ENCODE measurements at regions of chr15 and their contacts with region 1.

Region 1: GRCh38 chr15:92930776-92931175 is 30.7 kb downstream of the CHD2 start:
- DNase-seq: no peak
- H3K4me3 ChIP-seq: no peak overlapping the region
- H3K4me3 Mint-ChIP-seq: no peak overlapping the region
- H3K27ac ChIP-seq: peak overlapping the region in 1 of 2 donors; percentile 18
- H3K27ac Mint-ChIP-seq: peak overlapping the region in 3 of 7 donors; percentile 0 to 76 (median 39)
- H3K4me1 ChIP-seq: peaks cover 19% of the 10 kb centered on the region in 2 donors
- H3K4me1 Mint-ChIP-seq: peaks cover 13% of the 10 kb centered on the region
- H3K27me3 ChIP-seq: no peaks in the 10 kb centered on the region
- H3K27me3 Mint-ChIP-seq: no peaks in the 10 kb centered on the region
- CTCF ChIP-seq: no peak

Region 2: GRCh38 chr15:92992720-92993119 is 61.9 kb after region 1 on chr15:
- intact Hi-C with region 1: loop called in 1 of 2 experiments (anchors 10 kb)
- DNase-seq: no peak
- H3K4me3 ChIP-seq: no peak overlapping the region
- H3K4me3 Mint-ChIP-seq: no peak overlapping the region
- H3K27ac ChIP-seq: no peak overlapping the region
- H3K27ac Mint-ChIP-seq: peak overlapping the region in 1 of 7 donors; percentile 12
- H3K4me1 ChIP-seq: no peaks in the 10 kb centered on the region
- H3K4me1 Mint-ChIP-seq: peaks cover 4% of the 10 kb centered on the region
- H3K27me3 ChIP-seq: no peaks in the 10 kb centered on the region
- H3K27me3 Mint-ChIP-seq: peaks cover 0 to 3% (median 2%) of the 10 kb centered on the region in 3 donors
- CTCF ChIP-seq: no peak

Region 3: GRCh38 chr15:93028632-93029213 is 97.9 kb after region 1 on chr15:
- intact Hi-C with region 1: no loop called
- DNase-seq: peak; percentile 84 to 95 (median 89)
- H3K4me3 ChIP-seq: peak overlapping the region in 1 of 3 experiments; percentile 18
- H3K4me3 Mint-ChIP-seq: peak overlapping the region; percentile 7 to 68
- H3K27ac ChIP-seq: peak overlapping the region; percentile 87 to 95
- H3K27ac Mint-ChIP-seq: peak overlapping the region; percentile 93 to 98 (median 97)
- H3K4me1 ChIP-seq: peaks cover 66 to 70% of the 10 kb centered on the region in 2 donors
- H3K4me1 Mint-ChIP-seq: peaks cover 64% of the 10 kb centered on the region
- H3K27me3 ChIP-seq: no peaks in the 10 kb centered on the region
- H3K27me3 Mint-ChIP-seq: peaks cover 0 to 2% (median 2%) of the 10 kb centered on the region in 3 donors
- CTCF ChIP-seq: no peak

Region 4: GRCh38 chr15:93399121-93399520 is 468.3 kb after region 1 on chr15:
- intact Hi-C with region 1: no loop called
- DNase-seq: no peak
- H3K4me3 ChIP-seq: no peak overlapping the region
- H3K4me3 Mint-ChIP-seq: no peak overlapping the region
- H3K27ac ChIP-seq: no peak overlapping the region
- H3K27ac Mint-ChIP-seq: no peak overlapping the region
- H3K4me1 ChIP-seq: no peaks in the 10 kb centered on the region
- H3K4me1 Mint-ChIP-seq: no peaks in the 10 kb centered on the region
- H3K27me3 ChIP-seq: no peaks in the 10 kb centered on the region
- H3K27me3 Mint-ChIP-seq: peaks cover 4 to 7% (median 4%) of the 10 kb centered on the region in 3 donors
- CTCF ChIP-seq: no peak

Measured in CD14-positive monocyte (primary cell).